ENCODE measurements at regions of chr22 and their contacts with region 1.

Region 1: DNA sequence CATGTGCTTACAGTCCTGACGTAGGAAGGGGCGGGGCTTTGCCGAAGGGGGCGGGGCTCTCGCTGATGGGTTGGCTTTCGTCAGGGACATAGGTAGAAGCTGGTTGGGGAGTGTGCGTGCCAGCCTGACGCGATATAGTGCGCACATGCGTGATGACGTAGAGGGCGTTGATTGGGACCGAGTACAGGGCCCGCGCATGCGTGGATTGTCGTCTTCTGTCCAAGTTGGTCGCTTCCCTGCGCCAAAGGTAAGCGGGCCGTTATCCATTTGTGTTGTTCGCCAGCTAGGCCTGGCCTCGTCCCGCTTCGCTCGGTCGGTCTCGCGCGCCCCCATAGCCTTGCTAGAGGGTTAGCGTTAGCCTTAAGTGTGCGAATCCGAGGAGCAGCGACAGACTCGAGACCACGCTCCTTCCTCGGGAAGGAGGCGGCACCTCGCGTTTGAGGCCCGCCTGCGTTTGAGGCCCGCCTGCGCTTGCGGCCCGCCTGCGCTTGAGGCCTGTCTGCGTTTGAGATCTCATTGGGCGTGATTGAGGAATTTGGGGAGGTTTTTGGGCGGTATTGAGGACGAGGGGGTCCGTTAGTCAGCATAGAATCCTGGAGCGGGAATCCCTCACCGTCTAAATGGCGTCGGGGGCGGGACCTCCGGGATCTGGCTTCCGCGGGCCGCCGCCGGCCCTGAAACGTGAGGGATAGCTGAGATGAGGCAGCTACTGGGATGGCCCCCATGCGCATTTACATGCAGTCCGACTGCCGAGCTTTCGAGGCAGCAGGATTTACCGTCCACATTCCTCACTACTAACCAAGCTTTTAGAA is at the start of gene XRCC6:
- DNase-seq: peak; percentile 100
- H3K4me3 Mint-ChIP-seq: peak within 1 kb of the TSS; percentile 93
- H3K27ac Mint-ChIP-seq: peak within 1 kb of the TSS; percentile 95
- H3K4me1 Mint-ChIP-seq: peaks cover 29% of the 10 kb centered on the region
- H3K27me3 Mint-ChIP-seq: no peaks in the 10 kb centered on the region
- CTCF ChIP-seq: no peak
- total RNA-seq, gene XRCC6: 173 and 203 TPM in 2 replicates

Region 2: DNA sequence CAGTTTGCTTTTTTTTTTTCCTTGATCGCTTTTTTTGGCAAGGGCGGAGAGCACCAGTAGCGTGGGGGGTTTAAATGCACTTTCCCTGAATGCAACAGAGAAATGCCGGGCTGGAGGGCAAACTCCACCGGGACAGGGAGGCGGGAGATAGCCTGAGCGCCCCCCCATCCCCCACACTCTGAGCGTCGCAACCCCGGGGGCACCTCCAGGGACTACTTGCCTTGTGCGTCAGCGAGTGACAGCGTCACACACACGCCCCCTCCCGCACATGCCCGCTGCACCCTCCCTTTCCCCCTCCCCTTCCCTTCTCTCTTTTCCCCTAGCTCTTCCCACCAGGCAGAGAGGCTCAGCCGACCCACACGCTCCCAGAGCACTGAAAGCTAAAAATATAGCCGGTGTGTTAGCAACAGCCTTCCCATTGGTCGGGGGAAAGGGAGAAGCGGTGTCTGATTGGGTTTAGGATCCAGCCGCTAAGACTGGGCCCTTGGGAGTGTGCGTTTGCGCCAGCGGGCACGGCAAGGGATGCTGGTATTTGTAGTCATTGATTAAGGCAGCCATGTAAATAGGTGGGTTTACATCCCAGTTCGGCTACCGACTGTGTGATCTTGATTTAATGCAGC is 173.0 kb before region 1 on chr22:
- CTCF ChIA-PET with region 1: no interaction called
- POLR2A ChIA-PET with region 1: interaction called, 17 read pairs
- intact Hi-C with region 1: no loop called
- DNase-seq: peak; percentile 100
- H3K4me3 Mint-ChIP-seq: peak overlapping the region; percentile 96
- H3K27ac Mint-ChIP-seq: peak overlapping the region; percentile 97
- H3K4me1 Mint-ChIP-seq: peaks cover 11% of the 10 kb centered on the region
- H3K27me3 Mint-ChIP-seq: no peaks in the 10 kb centered on the region
- CTCF ChIP-seq: no peak

Region 3: GRCh38 chr22:41589391-41590241 is 31.7 kb before region 1 on chr22 and contains the start of gene PMM1:
- CTCF ChIA-PET with region 1: interaction called, 3 read pairs
- POLR2A ChIA-PET with region 1: interaction called, 60 read pairs
- intact Hi-C with region 1: no loop called
- DNase-seq: peak; percentile 100
- H3K4me3 Mint-ChIP-seq: peak within 1 kb of the TSS; percentile 88
- H3K27ac Mint-ChIP-seq: peak within 1 kb of the TSS; percentile 86
- H3K4me1 Mint-ChIP-seq: peaks cover 4% of the 10 kb centered on the region
- H3K27me3 Mint-ChIP-seq: no peaks in the 10 kb centered on the region
- CTCF ChIP-seq: no peak
- total RNA-seq, gene PMM1: 29.9 and 30.9 TPM in 2 replicates

Region 4: GRCh38 chr22:41636467-41636866 is 15.2 kb after region 1 on chr22:
- CTCF ChIA-PET with region 1: no interaction called
- POLR2A ChIA-PET with region 1: interaction called, 49 read pairs
- intact Hi-C with region 1: no loop called
- DNase-seq: peak; percentile 72
- H3K4me3 Mint-ChIP-seq: no peak overlapping the region
- H3K27ac Mint-ChIP-seq: peak overlapping the region; percentile 77
- H3K4me1 Mint-ChIP-seq: peaks cover 6% of the 10 kb centered on the region
- H3K27me3 Mint-ChIP-seq: no peaks in the 10 kb centered on the region
- CTCF ChIP-seq: no peak

Region 5: GRCh38 chr22:41666661-41667258 is 45.5 kb after region 1 on chr22:
- CTCF ChIA-PET with region 1: interaction called, 3 read pairs
- POLR2A ChIA-PET with region 1: interaction called, 36 read pairs
- intact Hi-C with region 1: no loop called
- DNase-seq: peak; percentile 91
- H3K4me3 Mint-ChIP-seq: peak overlapping the region; percentile 64
- H3K27ac Mint-ChIP-seq: peak overlapping the region; percentile 93
- H3K4me1 Mint-ChIP-seq: peaks cover 5% of the 10 kb centered on the region
- H3K27me3 Mint-ChIP-seq: no peaks in the 10 kb centered on the region
- CTCF ChIP-seq: peak; percentile 92